Activated CD4-positive, alpha-beta T cell treated with anti-CD3 and anti-CD28 coated beads, Interleukin-2, amount 10 ng/mL, durations not matched to agents 24 days and 14 days (primary cell): ENCODE measurements at regions of chr7 and their contacts with region 1.

Region 1: DNA sequence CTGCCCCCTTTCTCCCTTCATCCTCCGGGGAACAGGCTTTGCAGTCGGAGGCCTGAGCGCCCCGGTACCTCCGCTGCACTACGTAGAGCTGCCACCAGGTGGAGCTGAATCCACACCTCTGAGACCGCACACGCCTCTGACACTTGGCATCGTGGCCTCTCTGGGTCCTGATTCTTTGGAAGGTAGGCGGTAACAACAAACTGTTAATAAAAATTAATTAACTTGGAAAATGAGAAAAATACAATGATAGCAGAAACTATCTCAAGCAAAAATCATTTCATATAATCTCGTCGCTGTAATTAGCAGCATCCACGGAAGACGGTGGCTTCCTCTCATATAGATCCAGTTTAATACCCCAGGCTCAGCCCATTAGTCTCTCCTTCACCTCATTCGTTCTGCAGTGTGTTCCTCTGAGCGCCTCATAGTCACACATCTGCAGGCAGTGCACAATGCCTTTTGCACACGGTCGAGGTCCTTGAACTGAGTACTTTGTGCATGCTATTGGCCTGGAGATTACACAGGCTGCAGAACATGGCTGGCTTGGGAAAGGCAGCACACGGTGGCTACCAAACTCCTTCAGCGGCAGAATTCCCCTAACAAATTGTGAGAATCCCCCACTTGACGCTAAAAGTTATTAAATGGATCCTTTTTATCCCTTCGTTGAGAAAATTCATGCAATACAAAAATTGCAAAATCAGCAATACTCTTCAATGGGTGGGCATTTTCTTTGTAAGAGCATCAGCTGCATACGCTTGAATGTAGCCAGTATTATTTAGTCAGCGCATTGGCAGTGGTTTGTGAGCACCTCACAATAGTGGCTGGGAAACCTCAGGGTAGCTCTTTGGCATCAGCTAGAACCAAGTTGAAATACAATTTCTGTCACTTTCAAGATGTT is 18.7 kb downstream of the OR9A2 start:
- DNase-seq: peak; percentile 94
- H3K4me3 Mint-ChIP-seq: no peak overlapping the region
- H3K27ac Mint-ChIP-seq: no peak overlapping the region
- H3K4me1 Mint-ChIP-seq: peaks cover 5% of the 10 kb centered on the region
- H3K27me3 Mint-ChIP-seq: peaks cover 17% of the 10 kb centered on the region

Region 2: DNA sequence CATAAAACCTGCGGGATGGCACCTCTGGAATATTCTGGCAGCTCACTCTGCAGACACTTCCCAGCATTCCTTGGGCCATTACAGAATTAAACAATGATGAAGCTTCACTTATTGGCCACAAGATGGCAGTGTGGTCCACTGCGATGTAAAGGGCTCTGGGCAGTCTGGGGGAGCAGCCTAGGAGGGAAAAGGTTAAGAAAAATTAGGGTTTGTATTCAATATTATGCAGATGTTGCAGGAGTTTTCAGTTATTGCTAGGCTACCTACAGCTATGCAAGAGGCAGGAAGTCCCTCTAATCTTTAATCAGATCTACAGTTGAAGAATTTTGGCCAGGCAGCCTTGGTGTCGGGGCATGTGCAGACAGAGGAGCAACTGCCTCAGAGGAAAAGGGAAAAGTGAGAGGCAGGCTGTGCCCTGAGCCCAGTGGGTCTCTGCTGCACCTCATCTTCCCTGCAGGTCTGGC is 492.2 kb before region 1 on chr7:
- intact Hi-C with region 1: loop called (anchors 5 kb)
- DNase-seq: peak; percentile 77
- H3K4me3 Mint-ChIP-seq: no peak overlapping the region
- H3K27ac Mint-ChIP-seq: no peak overlapping the region
- H3K4me1 Mint-ChIP-seq: peaks cover 20% of the 10 kb centered on the region
- H3K27me3 Mint-ChIP-seq: peaks cover 10% of the 10 kb centered on the region

Region 3: DNA sequence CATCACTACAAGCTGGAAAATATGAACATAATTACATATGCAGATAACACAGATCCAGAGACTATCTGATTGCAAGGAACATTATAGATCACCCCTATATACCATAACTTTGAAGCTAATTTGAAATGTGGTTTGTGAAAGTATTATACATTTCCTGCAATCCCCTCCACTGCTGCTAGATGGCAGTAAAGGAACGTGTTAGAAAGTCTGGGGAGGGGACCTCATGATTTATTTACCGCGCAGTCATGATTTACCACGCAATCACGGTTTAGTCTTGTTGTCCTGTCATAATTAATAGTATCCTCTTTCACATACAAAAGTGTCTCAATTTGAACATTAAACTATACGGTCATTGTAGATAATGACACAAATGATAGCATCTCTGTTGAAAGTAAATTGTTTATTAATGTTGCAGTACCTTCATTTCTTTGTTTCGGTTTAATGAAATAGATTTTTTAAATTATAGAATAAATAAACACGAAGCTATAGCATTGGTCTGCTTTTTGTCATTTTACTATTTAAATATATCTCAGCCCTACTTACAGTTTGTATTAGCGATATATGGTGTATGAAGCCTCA is 404.3 kb before region 1 on chr7:
- intact Hi-C with region 1: loop called (anchors 2 kb)
- DNase-seq: peak; percentile 86
- H3K4me3 Mint-ChIP-seq: peak overlapping the region; percentile 4
- H3K27ac Mint-ChIP-seq: no peak overlapping the region
- H3K4me1 Mint-ChIP-seq: peaks cover 3% of the 10 kb centered on the region
- H3K27me3 Mint-ChIP-seq: peaks cover 10% of the 10 kb centered on the region

Region 4: GRCh38 chr7:142853739-142854371 is 154.4 kb before region 1 on chr7:
- intact Hi-C with region 1: loop called (anchors 2 kb)
- DNase-seq: peak; percentile 90
- H3K4me3 Mint-ChIP-seq: peak overlapping the region; percentile 94
- H3K27ac Mint-ChIP-seq: peak overlapping the region; percentile 82
- H3K4me1 Mint-ChIP-seq: peaks cover 14% of the 10 kb centered on the region
- H3K27me3 Mint-ChIP-seq: peaks cover 17% of the 10 kb centered on the region

Region 5: DNA sequence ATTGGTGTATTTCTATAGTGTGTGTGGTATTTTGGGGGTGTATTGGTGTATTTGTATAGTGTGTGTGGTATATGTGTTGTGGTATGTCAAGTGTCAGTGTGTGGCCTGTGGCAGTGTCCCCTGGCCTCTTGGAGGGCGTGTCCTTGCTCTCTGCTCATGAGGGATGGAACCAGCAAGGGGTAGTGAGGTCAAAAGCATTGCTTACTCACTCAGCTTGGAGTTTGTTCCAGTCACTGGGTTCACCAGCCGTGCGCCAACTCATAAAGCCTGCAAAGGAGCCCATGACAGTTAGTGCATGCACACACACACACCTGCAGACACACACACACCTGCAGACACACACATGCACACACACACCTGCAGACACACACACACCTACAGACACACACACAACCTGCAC is 118.4 kb before region 1 on chr7:
- intact Hi-C with region 1: no loop called
- DNase-seq: no peak
- H3K4me3 Mint-ChIP-seq: no peak overlapping the region
- H3K27ac Mint-ChIP-seq: no peak overlapping the region
- H3K4me1 Mint-ChIP-seq: no peaks in the 10 kb centered on the region
- H3K27me3 Mint-ChIP-seq: no peaks in the 10 kb centered on the region

Region 6: GRCh38 chr7:143027683-143028082 is 19.4 kb after region 1 on chr7:
- intact Hi-C with region 1: no loop called
- DNase-seq: no peak
- H3K4me3 Mint-ChIP-seq: no peak overlapping the region
- H3K27ac Mint-ChIP-seq: no peak overlapping the region
- H3K4me1 Mint-ChIP-seq: no peaks in the 10 kb centered on the region
- H3K27me3 Mint-ChIP-seq: peaks cover 11% of the 10 kb centered on the region

Region 7: DNA sequence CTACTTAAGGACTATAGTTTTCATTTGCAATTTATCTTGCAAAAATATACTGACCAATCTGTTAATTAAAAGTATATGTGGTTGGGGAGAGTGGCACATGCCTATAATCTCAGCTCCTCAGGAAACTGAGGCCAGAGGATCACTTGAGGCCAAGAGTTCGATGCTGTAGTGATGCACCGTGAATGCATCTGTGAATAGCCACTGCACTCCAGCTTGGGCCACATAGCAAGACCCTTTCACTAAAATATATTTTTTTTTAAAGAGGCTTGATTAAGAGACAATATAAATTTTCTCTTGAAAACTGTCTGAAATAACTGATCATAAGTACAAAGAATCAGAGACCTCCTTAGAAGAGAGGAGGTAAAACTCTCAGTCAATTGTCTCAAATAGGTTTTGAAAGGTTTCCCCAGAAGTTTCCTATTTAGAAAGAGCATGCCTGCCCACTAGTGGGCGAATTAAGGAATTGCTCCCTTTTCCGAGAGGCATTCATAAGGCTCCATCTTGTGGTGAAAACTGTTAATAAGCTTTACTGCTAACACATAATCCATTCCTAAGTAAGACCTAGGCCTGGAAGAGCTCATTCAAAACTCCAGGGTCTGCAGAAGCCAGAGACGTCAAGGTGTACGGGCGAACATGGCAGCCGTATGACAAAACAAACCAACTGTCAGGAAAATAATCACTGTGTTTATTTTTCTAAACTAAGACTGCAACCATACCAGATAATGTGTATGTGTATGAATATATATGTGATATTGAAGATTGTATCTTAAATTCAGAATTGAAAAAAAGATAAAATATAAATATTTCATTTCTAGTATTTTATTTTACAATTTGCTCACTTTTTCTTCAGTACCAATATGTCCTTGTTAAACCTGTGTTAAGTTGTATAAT is 206.8 kb after region 1 on chr7:
- intact Hi-C with region 1: loop called (anchors 1 kb)
- DNase-seq: peak; percentile 91
- H3K4me3 Mint-ChIP-seq: no peak overlapping the region
- H3K27ac Mint-ChIP-seq: no peak overlapping the region
- H3K4me1 Mint-ChIP-seq: no peaks in the 10 kb centered on the region
- H3K27me3 Mint-ChIP-seq: peaks cover 24% of the 10 kb centered on the region